Naive thymus-derived CD4-positive, alpha-beta T cell (primary cell): ENCODE measurements at regions of chr6 and their contacts with region 1.

Region 1: GRCh38 chr6:158020272-158020711 is 38.6 kb downstream of the SYNJ2 start:
- DNase-seq: no peak
- ATAC-seq: no peak
- H3K4me3 ChIP-seq: no peak overlapping the region
- H3K4me3 Mint-ChIP-seq: no peak overlapping the region
- H3K27ac ChIP-seq: no peak overlapping the region
- H3K27ac Mint-ChIP-seq: peak overlapping the region in 5 of 9 donors; percentile 3 to 80 (median 29)
- H3K4me1 ChIP-seq: peaks cover 0 to 1% of the 10 kb centered on the region in 2 donors
- H3K4me1 Mint-ChIP-seq: peaks cover under 1 to 23% (median 6%) of the 10 kb centered on the region in 7 donors
- H3K27me3 ChIP-seq: no peaks in the 10 kb centered on the region
- H3K27me3 Mint-ChIP-seq: no peaks in the 10 kb centered on the region

Region 2: GRCh38 chr6:158031381-158032353 is 11.4 kb after region 1 on chr6:
- CTCF ChIA-PET with region 1: interaction called, 21 read pairs
- POLR2A ChIA-PET with region 1: interaction called, 14 read pairs
- intact Hi-C with region 1: no loop called
- DNase-seq: no peak
- ATAC-seq: peak; percentile 70
- H3K4me3 ChIP-seq: no peak overlapping the region
- H3K4me3 Mint-ChIP-seq: peak overlapping the region in 1 of 10 donors; percentile 19
- H3K27ac ChIP-seq: no peak overlapping the region
- H3K27ac Mint-ChIP-seq: peak overlapping the region; percentile 22 to 89 (median 74)
- H3K4me1 ChIP-seq: peaks cover 12 to 20% of the 10 kb centered on the region in 2 donors
- H3K4me1 Mint-ChIP-seq: peaks cover 25 to 33% (median 32%) of the 10 kb centered on the region in 7 donors
- H3K27me3 ChIP-seq: no peaks in the 10 kb centered on the region
- H3K27me3 Mint-ChIP-seq: no peaks in the 10 kb centered on the region